Activated naive CD4-positive, alpha-beta T cell treated with anti-CD3 and anti-CD28 coated beads for 36 hours (primary cell): ENCODE measurements at regions of chr14 and their contacts with region 1.

Region 1: DNA sequence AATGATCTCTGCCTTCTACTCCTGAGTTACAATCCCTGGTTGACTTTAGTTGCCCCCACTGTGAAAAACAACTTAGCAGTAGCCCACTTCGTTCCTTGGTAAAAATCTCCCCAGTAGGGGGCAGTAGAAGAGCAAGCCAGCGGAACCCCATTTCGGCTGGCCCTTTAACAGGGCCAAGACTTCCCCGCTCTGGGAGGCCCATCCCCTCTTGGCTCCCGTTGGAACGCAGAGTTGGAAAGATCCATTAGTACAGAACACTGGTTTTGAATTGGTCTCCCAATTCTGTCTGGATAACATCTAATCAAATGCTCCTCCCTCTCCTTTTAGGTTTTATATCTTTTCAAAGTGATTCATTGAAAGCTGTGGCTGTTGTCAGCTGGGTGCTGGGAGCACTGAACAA is 1133.3 kb downstream of the BCL11B start:
- DNase-seq: peak; percentile 77
- H3K4me3 Mint-ChIP-seq: peak overlapping the region; percentile 71
- H3K27ac Mint-ChIP-seq: peak overlapping the region; percentile 98
- H3K4me1 Mint-ChIP-seq: peaks cover 81% of the 10 kb centered on the region
- H3K27me3 Mint-ChIP-seq: no peaks in the 10 kb centered on the region

Region 2: GRCh38 chr14:97299661-97300060 is 839.0 kb before region 1 on chr14:
- CTCF ChIA-PET with region 1: no interaction called
- intact Hi-C with region 1: loop called (anchors 10 kb)
- DNase-seq: peak; percentile 62
- H3K4me3 Mint-ChIP-seq: no peak overlapping the region
- H3K27ac Mint-ChIP-seq: no peak overlapping the region
- H3K4me1 Mint-ChIP-seq: peaks cover 4% of the 10 kb centered on the region
- H3K27me3 Mint-ChIP-seq: no peaks in the 10 kb centered on the region

Region 3: GRCh38 chr14:97874394-97874793 is 264.3 kb before region 1 on chr14:
- CTCF ChIA-PET with region 1: no interaction called
- intact Hi-C with region 1: loop called (anchors 5 kb)
- DNase-seq: peak; percentile 51
- H3K4me3 Mint-ChIP-seq: peak overlapping the region; percentile 34
- H3K27ac Mint-ChIP-seq: no peak overlapping the region
- H3K4me1 Mint-ChIP-seq: peaks cover 32% of the 10 kb centered on the region
- H3K27me3 Mint-ChIP-seq: no peaks in the 10 kb centered on the region

Region 4: DNA sequence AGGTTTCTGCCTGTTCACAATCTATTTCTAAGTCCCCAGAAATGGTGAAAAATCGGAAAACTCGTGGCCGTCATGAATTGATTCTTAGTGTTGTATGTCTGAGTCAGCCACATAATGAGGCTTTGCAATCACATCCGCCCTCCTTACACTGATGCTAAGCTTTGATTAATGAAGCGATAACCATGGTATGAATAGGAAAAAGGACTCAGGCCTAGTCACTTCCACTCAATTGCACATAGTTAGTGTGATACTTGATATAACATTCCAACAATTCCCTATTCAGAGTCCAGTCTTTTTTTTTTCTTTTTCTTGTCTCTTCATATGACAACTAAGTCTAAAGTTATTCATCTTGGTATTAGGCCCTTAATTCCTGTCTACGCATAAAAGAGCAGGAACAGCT is 110.5 kb before region 1 on chr14:
- CTCF ChIA-PET with region 1: no interaction called
- intact Hi-C with region 1: no loop called
- DNase-seq: no peak
- H3K4me3 Mint-ChIP-seq: no peak overlapping the region
- H3K27ac Mint-ChIP-seq: no peak overlapping the region
- H3K4me1 Mint-ChIP-seq: peaks cover 10% of the 10 kb centered on the region
- H3K27me3 Mint-ChIP-seq: no peaks in the 10 kb centered on the region

Region 5: GRCh38 chr14:98167705-98168104 is 29.0 kb after region 1 on chr14:
- CTCF ChIA-PET with region 1: interaction called, 57 read pairs
- intact Hi-C with region 1: loop called (anchors 1 kb)
- DNase-seq: peak; percentile 65
- H3K4me3 Mint-ChIP-seq: peak overlapping the region; percentile 56
- H3K27ac Mint-ChIP-seq: peak overlapping the region; percentile 98
- H3K4me1 Mint-ChIP-seq: peaks cover 93% of the 10 kb centered on the region
- H3K27me3 Mint-ChIP-seq: no peaks in the 10 kb centered on the region

Region 6: DNA sequence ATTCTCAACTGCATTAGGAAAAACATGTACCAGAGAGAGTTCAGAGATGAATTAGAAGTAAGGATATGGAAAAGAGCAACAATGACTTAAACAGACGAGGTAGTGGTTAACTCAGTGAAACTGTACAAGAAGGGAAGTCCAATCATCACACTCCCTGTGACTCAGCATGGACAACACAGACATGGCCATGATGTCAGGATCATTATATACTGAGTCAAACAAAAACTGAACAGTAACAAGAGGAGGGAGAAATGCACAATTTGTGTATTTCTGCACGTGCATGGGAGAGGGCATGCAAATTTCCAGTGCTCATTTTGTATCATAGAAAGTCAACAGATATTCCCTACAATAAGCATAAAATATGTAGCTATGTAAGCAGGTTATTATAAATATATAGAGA is 95.5 kb after region 1 on chr14:
- CTCF ChIA-PET with region 1: interaction called, 7 read pairs
- intact Hi-C with region 1: loop called (anchors 2 kb)
- DNase-seq: peak; percentile 82
- H3K4me3 Mint-ChIP-seq: no peak overlapping the region
- H3K27ac Mint-ChIP-seq: peak overlapping the region; percentile 71
- H3K4me1 Mint-ChIP-seq: peaks cover 74% of the 10 kb centered on the region
- H3K27me3 Mint-ChIP-seq: no peaks in the 10 kb centered on the region

Region 7: DNA sequence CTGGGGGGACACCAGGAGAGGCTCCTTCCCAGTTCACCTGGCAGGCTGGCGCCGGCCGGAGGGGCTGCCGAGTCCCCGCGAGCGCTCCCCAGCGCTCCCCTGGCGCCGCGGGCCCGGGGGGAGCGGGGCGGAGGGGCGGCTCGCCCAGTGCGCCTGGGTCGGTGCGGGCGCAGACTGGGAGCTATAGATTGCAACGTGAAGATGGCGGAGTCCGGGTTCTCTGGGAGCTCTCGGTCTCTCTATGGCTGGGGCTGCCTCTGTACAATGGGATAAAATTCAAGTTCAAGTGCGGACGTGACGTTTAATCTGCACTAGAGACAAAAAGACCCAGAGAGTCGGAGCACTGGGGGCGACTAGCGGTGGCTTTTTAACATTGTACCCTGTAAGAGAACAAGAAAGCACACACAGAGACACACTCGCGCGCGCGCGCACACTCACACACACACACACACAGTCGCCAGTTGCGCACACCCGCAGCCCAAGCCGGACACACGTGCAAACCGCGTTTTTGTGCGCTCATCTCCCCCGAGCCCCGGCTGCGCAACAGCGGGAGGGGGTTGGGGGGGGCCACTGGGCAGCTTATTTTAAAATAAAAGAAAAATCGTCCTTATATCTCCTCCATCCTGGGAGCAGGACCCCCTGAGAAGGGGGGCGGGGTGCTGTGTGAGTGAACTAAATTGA is 1133.4 kb after region 1 on chr14 and contains the start of gene BCL11B:
- CTCF ChIA-PET with region 1: interaction called, 3 read pairs
- intact Hi-C with region 1: loop called (anchors 1 kb)
- DNase-seq: peak; percentile 95
- H3K4me3 Mint-ChIP-seq: peak within 1 kb of the TSS; percentile 96
- H3K27ac Mint-ChIP-seq: peak within 1 kb of the TSS; percentile 97
- H3K4me1 Mint-ChIP-seq: peaks cover 23% of the 10 kb centered on the region
- H3K27me3 Mint-ChIP-seq: no peaks in the 10 kb centered on the region
- total RNA-seq, gene BCL11B: 71.7 to 71.9 TPM